Activated CD8-positive, alpha-beta memory T cell treated with anti-CD3 and anti-CD28 coated beads, Interleukin-2, amount 10 ng/mL, durations not matched to agents 7 days and 5 days (primary cell): ENCODE measurements at regions of chr1 and their contacts with region 1.

Region 1: DNA sequence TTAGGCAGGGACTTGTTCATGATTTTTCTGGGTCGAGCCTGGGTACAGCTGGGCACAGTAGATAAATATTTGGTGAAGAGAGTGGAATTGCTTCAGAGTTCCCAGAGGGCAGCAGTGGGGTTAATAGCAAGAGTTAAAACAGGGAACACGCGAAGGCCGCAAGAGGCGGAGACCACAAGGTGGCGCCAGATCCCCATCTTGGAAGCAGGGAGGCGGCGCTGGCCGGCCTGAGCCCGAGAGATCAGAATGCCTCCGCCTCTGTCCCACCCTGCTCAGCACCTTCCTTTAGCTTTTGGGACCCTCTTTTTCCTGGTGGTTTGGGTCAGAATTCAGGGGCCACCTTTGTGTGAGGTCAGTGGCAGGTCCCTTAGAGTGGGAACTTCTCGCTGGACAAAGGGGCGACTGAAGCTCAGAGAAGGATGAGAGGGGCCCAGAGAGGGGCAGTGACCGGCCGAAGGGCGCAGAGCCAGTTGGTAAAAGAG is 6.5 kb upstream of the PADI2 start:
- DNase-seq: peak; percentile 84
- ATAC-seq: peak; percentile 92
- H3K4me3 Mint-ChIP-seq: no peak overlapping the region
- H3K27ac Mint-ChIP-seq: no peak overlapping the region
- H3K4me1 Mint-ChIP-seq: no peaks in the 10 kb centered on the region
- H3K27me3 Mint-ChIP-seq: peaks cover 10% of the 10 kb centered on the region

Region 2: DNA sequence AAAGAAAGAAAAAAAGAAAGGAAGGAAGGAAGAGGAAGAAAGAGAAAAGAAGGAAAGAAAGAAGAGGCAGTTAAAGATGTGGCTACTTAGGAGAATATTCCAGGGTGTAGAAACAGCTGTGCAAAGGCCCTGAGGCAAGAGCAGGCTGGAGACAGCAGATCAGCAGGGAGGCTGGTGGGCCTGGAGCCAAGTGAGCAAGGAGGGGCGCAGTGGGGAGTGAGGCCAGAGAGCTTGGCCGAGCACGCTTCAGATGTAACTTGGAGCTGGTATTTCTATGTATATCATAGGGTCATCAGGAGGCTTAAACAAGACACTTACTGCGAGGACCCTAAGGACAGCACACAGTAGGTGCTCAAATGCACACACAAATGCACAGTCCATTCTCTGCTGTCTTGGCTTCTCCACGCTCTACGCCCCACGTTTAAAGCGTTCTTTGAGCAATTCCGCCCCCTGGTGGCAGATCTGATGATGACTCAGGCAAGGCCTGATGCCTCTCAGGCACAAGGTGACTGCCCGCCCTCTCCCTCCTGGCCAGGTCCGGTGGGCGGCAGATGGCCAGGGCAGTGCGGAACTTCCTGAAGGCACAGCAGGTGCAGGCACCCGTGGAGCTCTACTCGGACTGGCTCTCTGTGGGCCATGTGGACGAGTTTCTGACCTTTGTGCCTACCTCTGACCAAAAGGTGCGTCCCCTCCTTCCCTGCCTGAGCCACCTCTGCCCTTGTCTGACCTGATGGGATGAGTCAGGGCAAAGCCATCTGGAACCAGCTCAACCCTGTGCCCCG is 111.2 kb after region 1 on chr1:
- CTCF ChIA-PET with region 1: interaction called, 157 read pairs
- DNase-seq: peak; percentile 89
- ATAC-seq: peak; percentile 91
- H3K4me3 Mint-ChIP-seq: no peak overlapping the region
- H3K27ac Mint-ChIP-seq: no peak overlapping the region
- H3K4me1 Mint-ChIP-seq: peaks cover 4% of the 10 kb centered on the region
- H3K27me3 Mint-ChIP-seq: peaks cover 17% of the 10 kb centered on the region